ENCODE measurements at regions of chr7 and their contacts with region 1.

Region 1: GRCh38 chr7:29113384-29114103 is 32.8 kb downstream of the CPVL start:
- DNase-seq: peak; percentile 24
- ATAC-seq: peak; percentile 50; the same call in 2 of the 3 replicates
- H3K4me3 ChIP-seq: no peak overlapping the region
- H3K27ac ChIP-seq: no peak overlapping the region
- H3K4me1 ChIP-seq: peaks cover 24% of the 10 kb centered on the region
- H3K27me3 ChIP-seq: no peaks in the 10 kb centered on the region
- CTCF ChIP-seq: peak; percentile 67
- EP300 ChIP-seq: no peak
- POLR2A ChIP-seq: no peak
- RAD21 ChIP-seq: no peak

Region 2: DNA sequence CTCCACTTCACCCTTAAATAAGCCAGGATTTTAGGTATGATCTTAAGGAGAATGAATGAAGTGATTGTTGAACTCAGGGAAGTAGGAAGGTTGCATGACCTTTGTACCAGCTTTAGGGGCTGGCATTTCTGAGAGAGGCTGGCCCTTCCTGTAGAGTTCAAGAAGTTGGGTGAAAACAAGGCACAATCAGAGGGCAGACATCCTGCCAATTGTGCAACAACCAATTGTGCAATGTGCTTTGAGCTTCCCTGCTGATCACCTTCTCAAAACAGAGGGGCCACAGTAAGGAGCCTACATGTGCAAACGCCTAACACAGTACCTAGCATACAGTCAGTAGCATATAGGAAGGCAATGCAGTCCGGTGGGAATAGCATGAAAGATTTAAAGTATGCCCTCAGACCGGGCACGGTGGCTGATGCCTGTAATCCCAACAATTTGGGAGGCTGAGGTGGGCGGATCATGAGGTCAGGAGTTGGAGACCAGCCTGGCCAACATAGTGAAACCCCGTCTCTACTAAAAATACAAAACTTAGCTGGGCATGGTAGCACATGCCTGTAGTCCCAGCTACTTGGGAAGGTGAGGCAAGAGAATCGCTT is 27.4 kb after region 1 on chr7:
- CTCF ChIA-PET with region 1: no interaction called
- POLR2A ChIA-PET with region 1: interaction called, 10 read pairs
- in situ Hi-C with region 1: no loop called
- intact Hi-C with region 1: no loop called
- DNase-seq: peak; percentile 90
- ATAC-seq: peak; percentile 82
- H3K4me3 ChIP-seq: no peak overlapping the region
- H3K27ac ChIP-seq: peak overlapping the region; percentile 39
- H3K4me1 ChIP-seq: peaks cover 78% of the 10 kb centered on the region
- H3K27me3 ChIP-seq: no peaks in the 10 kb centered on the region; a peak in 1 of 5 replicates
- CTCF ChIP-seq: 0 out of 2 replicates have a peak, but pooled peaks have one; percentile 22
- EP300 ChIP-seq: peak in 1 of 2 experiments; percentile 95; a peak in 2 of 4 replicates
- POLR2A ChIP-seq: no peak
- RAD21 ChIP-seq: no peak

Region 3: GRCh38 chr7:29345600-29345999 is 232.1 kb after region 1 on chr7:
- CTCF ChIA-PET with region 1: interaction called, 3 read pairs
- POLR2A ChIA-PET with region 1: no interaction called
- in situ Hi-C with region 1: no loop called
- intact Hi-C with region 1: loop called (anchors 2 kb)
- DNase-seq: peak; percentile 38
- ATAC-seq: peak; percentile 87
- H3K4me3 ChIP-seq: no peak overlapping the region
- H3K27ac ChIP-seq: no peak overlapping the region
- H3K4me1 ChIP-seq: peaks cover 41% of the 10 kb centered on the region
- H3K27me3 ChIP-seq: no peaks in the 10 kb centered on the region
- CTCF ChIP-seq: peak; percentile 81
- EP300 ChIP-seq: no peak
- POLR2A ChIP-seq: no peak
- RAD21 ChIP-seq: peak; percentile 53

Measured in HepG2 (cell line).